Heart left ventricle (tissue), 16 donors: ENCODE measurements at regions of chr22 and their contacts with region 1.

Region 1: GRCh38 chr22:17830043-17830961 is 56.0 kb upstream of the BID start:
- DNase-seq: peak; percentile 83 to 87 (median 85)
- ATAC-seq: peak; percentile 69 to 81 (median 74)
- H3K4me3 ChIP-seq: no peak overlapping the region
- H3K27ac ChIP-seq: peak overlapping the region in 8 of 12 donors; percentile 49 to 79 (median 66)
- H3K4me1 ChIP-seq: peaks cover 4 to 63% (median 28%) of the 10 kb centered on the region in 12 donors
- H3K27me3 ChIP-seq: no peaks in the 10 kb centered on the region
- CTCF ChIP-seq: peak; percentile 95 to 100 (median 99)
- POLR2A ChIP-seq: no peak

Region 2: DNA sequence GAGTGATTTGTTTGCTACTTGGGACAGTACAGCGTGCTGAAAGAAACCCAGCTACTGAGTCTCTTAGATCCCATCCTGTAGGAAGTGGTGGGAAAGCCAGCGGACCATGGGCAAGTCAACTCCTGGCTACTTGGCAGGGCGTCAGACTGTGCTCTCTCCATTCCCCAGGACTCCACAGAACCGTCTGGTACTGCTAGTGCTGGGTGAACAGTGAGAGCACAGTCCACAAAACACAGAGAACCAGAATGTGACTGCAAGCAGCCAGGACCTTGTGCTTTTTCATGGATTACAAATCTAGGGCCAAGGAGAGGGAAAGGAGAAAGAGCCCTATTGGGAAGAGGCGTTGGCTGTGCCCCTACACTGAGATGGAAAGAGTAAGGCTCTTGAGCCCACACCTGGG is 66.3 kb before region 1 on chr22:
- intact Hi-C with region 1: no loop called
- DNase-seq: no peak
- ATAC-seq: no peak
- H3K4me3 ChIP-seq: no peak overlapping the region
- H3K27ac ChIP-seq: no peak overlapping the region
- H3K4me1 ChIP-seq: peaks cover 0 to 28% (median 0%) of the 10 kb centered on the region in 12 donors
- H3K27me3 ChIP-seq: no peaks in the 10 kb centered on the region
- CTCF ChIP-seq: no peak
- POLR2A ChIP-seq: no peak

Region 3: DNA sequence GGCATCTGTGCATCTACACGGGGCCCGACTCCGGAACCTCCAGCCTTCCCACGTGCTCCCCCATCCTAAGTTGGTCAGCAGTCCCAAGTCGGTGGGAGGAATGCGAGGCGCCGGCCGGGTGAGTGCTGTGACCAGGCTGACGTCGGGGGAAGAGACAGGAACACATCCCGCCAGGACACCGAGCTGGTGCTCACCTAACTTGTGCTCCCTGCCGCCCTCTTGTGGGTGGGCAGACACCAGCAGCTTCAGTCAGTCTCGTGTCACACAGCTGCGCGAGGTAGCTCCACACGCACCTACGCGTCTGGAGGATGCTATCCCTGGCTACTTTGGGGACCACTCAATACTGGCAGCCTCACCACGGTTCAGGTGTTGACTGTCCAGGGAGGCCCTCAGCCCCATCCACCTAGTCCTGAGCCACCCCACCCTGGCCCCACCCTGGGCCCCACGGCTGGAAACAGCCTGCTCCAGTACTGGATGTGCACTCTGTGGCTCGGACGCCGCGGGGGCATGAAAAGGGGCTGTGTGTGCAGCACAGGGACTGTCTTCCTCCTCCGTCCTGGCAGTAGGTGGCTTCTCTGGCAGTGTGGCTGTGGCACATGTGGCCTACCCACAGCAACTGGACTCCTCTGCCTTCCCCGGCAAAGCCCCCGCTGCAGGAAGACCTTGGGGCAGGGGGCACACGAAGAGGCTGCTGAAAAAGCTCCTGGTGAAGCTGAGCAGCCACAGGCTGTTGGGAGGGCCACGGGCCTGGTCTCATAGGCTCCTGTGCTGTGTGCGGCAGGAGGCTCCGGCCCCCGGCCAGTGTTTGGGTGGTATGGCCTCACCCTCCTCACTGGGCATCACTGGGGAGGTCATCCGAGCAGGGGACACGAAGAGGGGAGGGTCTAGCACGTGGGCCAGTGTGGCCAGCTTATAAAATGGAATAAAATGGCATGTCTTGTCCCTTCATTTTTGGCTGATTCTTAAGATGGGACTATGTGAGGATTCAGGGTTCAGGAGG is 44.8 kb before region 1 on chr22:
- intact Hi-C with region 1: no loop called
- DNase-seq: peak in 4 of 5 donors; percentile 62 to 82 (median 70)
- ATAC-seq: peak in 3 of 4 donors; percentile 6 to 28 (median 18)
- H3K4me3 ChIP-seq: no peak overlapping the region
- H3K27ac ChIP-seq: peak overlapping the region; percentile 59 to 90 (median 84)
- H3K4me1 ChIP-seq: peaks cover 0 to 57% (median 29%) of the 10 kb centered on the region in 12 donors
- H3K27me3 ChIP-seq: no peaks in the 10 kb centered on the region
- CTCF ChIP-seq: peak; percentile 25 to 65 (median 48)
- POLR2A ChIP-seq: no peak

Region 4: GRCh38 chr22:17876306-17876831 is 46.1 kb after region 1 on chr22:
- intact Hi-C with region 1: loop called in 1 of 10 experiments (anchors 5 kb)
- DNase-seq: no peak
- ATAC-seq: no peak
- H3K4me3 ChIP-seq: no peak overlapping the region
- H3K27ac ChIP-seq: peak overlapping the region in 1 of 12 donors; percentile 57
- H3K4me1 ChIP-seq: peaks cover 0 to 16% (median 0%) of the 10 kb centered on the region in 12 donors
- H3K27me3 ChIP-seq: no peaks in the 10 kb centered on the region
- CTCF ChIP-seq: no peak
- POLR2A ChIP-seq: no peak

Region 5: DNA sequence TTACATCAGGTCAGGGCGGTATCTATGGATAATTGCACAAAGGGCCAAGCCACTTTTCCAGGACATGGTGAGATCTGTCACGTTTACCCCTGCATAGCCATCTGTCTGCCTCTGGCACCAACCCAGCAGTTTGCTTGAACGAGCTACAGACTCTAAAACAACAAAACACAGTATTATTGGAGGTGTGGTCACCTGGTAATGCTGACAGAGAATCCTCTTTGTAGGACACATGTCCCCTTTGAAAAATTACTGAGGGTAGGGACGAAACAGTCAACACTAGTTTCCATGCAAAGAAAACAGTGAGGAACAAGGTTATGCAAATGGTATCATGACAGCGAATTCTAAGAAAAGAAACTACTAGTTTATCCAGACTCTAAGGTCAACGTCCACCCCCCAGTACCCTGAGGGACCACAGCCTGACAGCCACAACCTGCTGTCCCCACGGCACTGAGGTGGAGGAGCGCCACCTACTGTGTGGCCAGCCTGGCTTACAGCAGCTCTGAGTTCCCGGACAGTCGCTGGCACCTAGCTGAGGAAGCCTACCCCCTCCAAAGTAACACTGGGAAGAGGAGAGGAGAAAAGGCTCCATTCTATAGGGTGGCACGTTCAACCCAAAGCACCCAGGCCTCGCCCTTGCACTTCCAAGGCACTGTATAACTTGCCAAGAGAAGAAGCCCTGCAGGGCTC is 61.3 kb after region 1 on chr22:
- intact Hi-C with region 1: loop called (anchors 1 to 10 kb)
- DNase-seq: peak in 4 of 5 donors; percentile 61 to 82 (median 68)
- ATAC-seq: peak; percentile 62 to 82 (median 72)
- H3K4me3 ChIP-seq: no peak overlapping the region
- H3K27ac ChIP-seq: peak overlapping the region; percentile 7 to 91 (median 80)
- H3K4me1 ChIP-seq: peaks cover 0 to 49% (median 18%) of the 10 kb centered on the region in 12 donors
- H3K27me3 ChIP-seq: no peaks in the 10 kb centered on the region
- CTCF ChIP-seq: peak; percentile 31 to 72 (median 58)
- POLR2A ChIP-seq: no peak

Region 6: GRCh38 chr22:17903564-17904295 is 73.4 kb after region 1 on chr22:
- intact Hi-C with region 1: loop called in 2 of 10 experiments (anchors 1 to 10 kb)
- DNase-seq: peak in 2 of 5 donors; percentile 56 to 59
- ATAC-seq: peak; percentile 47 to 64 (median 60)
- H3K4me3 ChIP-seq: no peak overlapping the region
- H3K27ac ChIP-seq: peak overlapping the region in 10 of 12 donors; percentile 24 to 92 (median 54)
- H3K4me1 ChIP-seq: peaks cover 0 to 57% (median 25%) of the 10 kb centered on the region in 12 donors
- H3K27me3 ChIP-seq: no peaks in the 10 kb centered on the region
- CTCF ChIP-seq: no peak
- POLR2A ChIP-seq: no peak

Region 7: DNA sequence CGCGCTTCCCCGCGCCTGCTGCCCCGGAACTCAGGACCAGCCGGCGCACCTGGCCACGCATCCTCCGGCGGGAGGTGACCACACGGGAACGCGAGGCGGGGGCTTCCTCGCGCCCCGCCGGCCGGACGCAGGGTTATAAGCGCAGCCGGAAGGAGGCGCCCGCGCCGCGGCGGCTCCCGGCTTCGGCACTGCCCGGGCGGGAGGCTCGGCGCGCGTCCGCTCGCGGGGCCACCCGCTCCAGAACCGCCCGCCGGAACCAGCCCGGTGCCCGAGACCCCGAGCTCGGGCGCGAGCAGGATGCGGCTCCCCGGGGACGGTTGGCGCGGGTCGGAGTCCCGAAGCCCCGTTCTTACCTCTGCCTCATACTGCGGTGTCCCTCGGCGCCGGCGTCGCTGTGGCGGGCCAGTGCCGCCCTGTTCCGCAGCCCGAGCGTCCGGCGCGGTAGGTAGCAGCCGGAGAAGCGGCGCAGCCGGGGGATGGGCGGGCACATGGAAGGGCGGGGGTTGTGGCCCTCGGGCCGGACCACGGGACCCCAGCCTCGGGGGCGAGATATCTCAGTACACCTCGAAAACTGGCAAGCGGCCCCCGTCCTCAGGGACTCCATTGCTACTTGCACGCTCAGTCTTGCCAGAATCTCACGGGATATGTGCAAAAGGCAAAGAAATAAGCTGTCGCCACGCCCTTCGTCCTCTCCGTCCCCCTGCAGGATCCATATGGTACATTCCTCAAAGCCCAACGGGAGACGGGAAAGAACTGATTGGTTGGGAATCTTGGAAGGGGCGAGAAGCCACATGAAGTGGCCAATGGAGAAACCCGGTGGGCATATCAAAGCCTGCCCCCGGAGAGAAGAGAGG is 171.0 kb after region 1 on chr22:
- intact Hi-C with region 1: loop called in 1 of 10 experiments (anchors 10 kb)
- DNase-seq: peak; percentile 91 to 94 (median 92)
- ATAC-seq: peak; percentile 96 to 98 (median 97)
- H3K4me3 ChIP-seq: peak overlapping the region; percentile 65 to 99 (median 84)
- H3K27ac ChIP-seq: peak overlapping the region; percentile 86 to 98 (median 95)
- H3K4me1 ChIP-seq: peaks cover 0 to 37% (median 18%) of the 10 kb centered on the region in 12 donors
- H3K27me3 ChIP-seq: peaks cover 0 to 3% (median 0%) of the 10 kb centered on the region in 9 donors
- CTCF ChIP-seq: peak in 11 of 12 donors; percentile 19 to 67 (median 49)
- POLR2A ChIP-seq: peak in 1 of 2 donors; percentile 86

Region 8: DNA sequence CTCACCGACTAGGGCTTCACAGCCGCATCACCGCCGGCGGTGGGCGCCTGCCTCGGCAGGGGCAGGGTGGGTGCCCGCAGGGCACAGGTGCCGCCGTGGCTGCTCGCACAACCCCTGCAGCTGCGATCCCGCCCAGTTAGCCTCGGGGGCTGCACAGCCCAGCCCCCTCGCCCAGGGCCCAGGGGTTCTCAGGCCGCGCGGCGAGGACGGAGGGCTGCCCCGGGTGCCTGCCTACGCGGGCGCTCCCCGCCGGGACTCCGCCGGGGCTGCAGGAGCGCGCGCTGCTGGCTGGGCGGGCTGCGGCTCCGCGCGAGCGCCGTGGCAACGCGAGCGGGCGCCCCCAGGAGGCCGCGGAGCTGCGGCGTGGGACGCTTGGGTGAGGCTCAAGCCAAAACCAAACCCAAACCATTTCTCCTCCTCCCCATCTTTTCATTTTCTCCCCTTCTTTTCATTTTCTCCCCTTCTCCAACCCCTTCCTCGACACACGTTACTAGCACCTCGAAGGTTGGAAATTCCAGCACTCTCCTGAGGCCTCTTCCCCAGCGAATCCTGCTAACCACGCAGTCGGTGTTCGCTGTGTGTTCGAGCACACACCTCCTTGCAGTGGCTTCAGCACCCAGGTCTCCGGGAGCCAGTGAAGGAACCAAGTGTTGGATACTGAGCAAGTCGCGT is 194.1 kb after region 1 on chr22 and contains the start of gene MICAL3:
- intact Hi-C with region 1: loop called in 9 of 10 experiments (anchors 5 to 10 kb)
- DNase-seq: peak; percentile 54 to 78 (median 68)
- ATAC-seq: peak in 3 of 4 donors; percentile 66 to 91 (median 87)
- H3K4me3 ChIP-seq: peak within 1 kb of the TSS; percentile 56 to 92 (median 72)
- H3K27ac ChIP-seq: peak within 1 kb of the TSS; percentile 22 to 91 (median 86)
- H3K4me1 ChIP-seq: peaks cover 0 to 35% (median 11%) of the 10 kb centered on the region in 12 donors
- H3K27me3 ChIP-seq: peaks cover 0 to 32% (median 0%) of the 10 kb centered on the region in 9 donors
- CTCF ChIP-seq: peak; percentile 27 to 80 (median 64)
- POLR2A ChIP-seq: peak in 1 of 2 donors; percentile 19
- total RNA-seq, gene MICAL3: 41.3 to 125 (median 101) TPM

Region 9: GRCh38 chr22:18031695-18032454 is 201.6 kb after region 1 on chr22:
- intact Hi-C with region 1: loop called in 2 of 10 experiments (anchors 5 to 10 kb)
- DNase-seq: peak in 3 of 5 donors; percentile 25 to 68 (median 36)
- ATAC-seq: peak; percentile 34 to 69 (median 45)
- H3K4me3 ChIP-seq: no peak overlapping the region
- H3K27ac ChIP-seq: peak overlapping the region in 10 of 12 donors; percentile 0 to 67 (median 40)
- H3K4me1 ChIP-seq: peaks cover 0 to 50% (median 16%) of the 10 kb centered on the region in 12 donors
- H3K27me3 ChIP-seq: no peaks in the 10 kb centered on the region
- CTCF ChIP-seq: no peak
- POLR2A ChIP-seq: no peak